ENCODE measurements at regions of chr5 and their contacts with region 1.

Region 1: GRCh38 chr5:126776497-126777256 is at the start of gene LMNB1:
- DNase-seq: peak; percentile 84
- H3K4me3 ChIP-seq: peak within 1 kb of the TSS; percentile 87
- H3K27ac ChIP-seq: peak within 1 kb of the TSS; percentile 85
- H3K27me3 ChIP-seq: no peaks in the 10 kb centered on the region
- CTCF ChIP-seq: no peak
- polyA plus RNA-seq, gene LMNB1: 11.9 and 17.2 TPM in 2 replicates

Region 2: GRCh38 chr5:126600631-126601511 is 175.8 kb before region 1 on chr5 and contains the start of gene PHAX:
- CTCF ChIA-PET with region 1: interaction called, 12 read pairs
- POLR2A ChIA-PET with region 1: no interaction called
- DNase-seq: peak; percentile 37
- H3K4me3 ChIP-seq: peak within 1 kb of the TSS; percentile 95
- H3K27ac ChIP-seq: peak within 1 kb of the TSS; percentile 57
- H3K27me3 ChIP-seq: no peaks in the 10 kb centered on the region
- CTCF ChIP-seq: peak; percentile 80
- polyA plus RNA-seq, gene PHAX: 38.9 and 61.0 TPM in 2 replicates

Region 3: DNA sequence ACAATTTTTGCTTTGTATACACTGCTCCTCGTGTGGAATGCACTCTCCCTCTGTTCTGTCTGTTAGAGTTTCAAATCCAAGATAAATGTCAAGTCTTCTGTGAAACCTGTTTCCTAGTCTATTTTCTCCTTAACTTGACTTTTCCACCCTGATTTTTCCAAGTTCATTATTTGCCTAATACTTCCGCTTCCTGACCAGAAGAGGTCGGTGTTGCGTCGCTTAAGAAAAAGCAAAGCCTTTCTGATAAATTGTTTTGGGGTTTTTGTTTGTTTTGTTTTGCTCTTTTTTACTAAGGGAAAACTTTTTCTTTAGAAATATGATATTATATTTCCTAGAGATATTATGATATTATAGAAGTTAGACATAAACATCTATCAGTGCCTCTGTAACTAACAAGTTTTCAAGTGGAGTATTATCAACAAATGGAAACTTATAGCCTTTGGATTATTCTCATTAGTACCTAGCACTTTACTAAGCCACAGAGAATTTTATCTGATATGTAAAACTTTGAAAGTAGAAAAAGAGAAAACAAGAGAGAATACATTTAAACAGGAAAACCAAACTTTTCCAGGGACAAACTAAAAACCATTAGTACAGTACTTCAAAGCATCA is 120.2 kb before region 1 on chr5:
- CTCF ChIA-PET with region 1: interaction called, 40 read pairs
- POLR2A ChIA-PET with region 1: no interaction called
- DNase-seq: peak; percentile 18
- H3K4me3 ChIP-seq: no peak overlapping the region
- H3K27ac ChIP-seq: no peak overlapping the region
- H3K27me3 ChIP-seq: no peaks in the 10 kb centered on the region
- CTCF ChIP-seq: peak; percentile 96

Region 4: GRCh38 chr5:126676195-126676624 is 100.5 kb before region 1 on chr5:
- CTCF ChIA-PET with region 1: interaction called, 156 read pairs
- POLR2A ChIA-PET with region 1: no interaction called
- DNase-seq: peak; percentile 18
- H3K4me3 ChIP-seq: no peak overlapping the region
- H3K27ac ChIP-seq: no peak overlapping the region
- H3K27me3 ChIP-seq: no peaks in the 10 kb centered on the region
- CTCF ChIP-seq: peak; percentile 87

Region 5: GRCh38 chr5:126794157-126794828 is 17.6 kb after region 1 on chr5:
- CTCF ChIA-PET with region 1: interaction called, 77 read pairs
- POLR2A ChIA-PET with region 1: interaction called, 8 read pairs
- DNase-seq: no peak
- H3K4me3 ChIP-seq: no peak overlapping the region
- H3K27ac ChIP-seq: no peak overlapping the region
- H3K27me3 ChIP-seq: no peaks in the 10 kb centered on the region
- CTCF ChIP-seq: no peak

Region 6: DNA sequence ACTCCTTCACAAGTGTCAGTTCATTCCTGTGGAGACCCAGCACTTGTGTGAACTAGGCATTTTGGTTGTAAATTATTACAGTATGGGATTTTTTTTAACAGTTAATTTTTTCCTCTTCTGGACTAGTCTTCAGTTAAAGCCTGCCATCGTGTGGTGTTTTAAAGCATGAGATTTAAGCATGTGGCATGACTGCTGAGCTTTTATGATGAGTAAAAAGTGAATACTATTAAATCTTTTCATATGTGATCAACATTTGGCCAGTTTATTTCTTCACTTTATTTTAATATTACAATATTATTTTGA is 25.3 kb after region 1 on chr5:
- CTCF ChIA-PET with region 1: interaction called, 77 read pairs
- POLR2A ChIA-PET with region 1: interaction called, 4 read pairs
- DNase-seq: no peak
- H3K4me3 ChIP-seq: no peak overlapping the region
- H3K27ac ChIP-seq: no peak overlapping the region
- H3K27me3 ChIP-seq: no peaks in the 10 kb centered on the region
- CTCF ChIP-seq: peak; percentile 59

Region 7: DNA sequence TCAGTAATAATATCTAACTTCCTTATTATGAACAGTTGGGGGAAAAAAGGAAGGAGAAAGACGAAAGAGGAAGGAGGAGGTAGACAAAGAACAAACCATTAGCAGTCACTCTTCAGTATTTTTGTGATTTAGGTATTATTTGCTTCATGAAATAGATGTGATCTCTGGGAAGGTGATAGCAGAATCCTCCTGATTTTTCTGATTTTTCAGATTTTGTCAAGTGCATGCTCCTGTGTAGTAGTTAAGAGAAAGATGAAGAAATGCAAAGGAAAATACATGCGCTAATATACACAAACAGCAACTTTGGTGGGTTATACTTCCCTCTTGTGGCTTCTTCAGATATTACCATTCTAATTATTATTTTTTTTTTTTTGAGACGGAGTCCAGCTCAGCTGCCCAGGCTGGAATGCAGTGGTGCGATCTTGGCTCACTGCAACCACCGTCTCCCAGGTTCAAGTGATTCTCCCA is 31.9 kb after region 1 on chr5:
- CTCF ChIA-PET with region 1: interaction called, 77 read pairs
- POLR2A ChIA-PET with region 1: no interaction called
- DNase-seq: no peak
- H3K4me3 ChIP-seq: no peak overlapping the region
- H3K27ac ChIP-seq: no peak overlapping the region
- H3K27me3 ChIP-seq: no peaks in the 10 kb centered on the region
- CTCF ChIP-seq: peak; percentile 60